ENCODE measurements at regions of chr6 and their contacts with region 1.

Region 1: GRCh38 chr6:36615018-36615761 is 21.0 kb downstream of the SRSF3 start:
- DNase-seq: peak; percentile 82
- ATAC-seq: peak; percentile 81
- H3K4me3 ChIP-seq: no peak overlapping the region
- H3K4me3 Mint-ChIP-seq: no peak overlapping the region
- H3K27ac ChIP-seq: no peak overlapping the region
- H3K27ac Mint-ChIP-seq: peak overlapping the region; percentile 69
- H3K4me1 ChIP-seq: peaks cover 9 to 21% of the 10 kb centered on the region in 2 donors
- H3K4me1 Mint-ChIP-seq: peaks cover 19% of the 10 kb centered on the region
- H3K27me3 ChIP-seq: no peaks in the 10 kb centered on the region
- H3K27me3 Mint-ChIP-seq: no peaks in the 10 kb centered on the region
- CTCF ChIP-seq: peak; percentile 84

Region 2: GRCh38 chr6:35259194-35259947 is 1355.8 kb before region 1 on chr6 and contains the start of gene ZNF76:
- CTCF ChIA-PET with region 1: no interaction called
- POLR2A ChIA-PET with region 1: no interaction called
- intact Hi-C with region 1: no loop called
- DNase-seq: peak; percentile 97
- ATAC-seq: peak; percentile 81
- H3K4me3 ChIP-seq: peak within 1 kb of the TSS; percentile 63 to 90 (median 81)
- H3K4me3 Mint-ChIP-seq: peak within 1 kb of the TSS; percentile 99
- H3K27ac ChIP-seq: peak within 1 kb of the TSS; percentile 97 to 98
- H3K27ac Mint-ChIP-seq: peak within 1 kb of the TSS; percentile 98
- H3K4me1 ChIP-seq: peaks cover 21 to 30% of the 10 kb centered on the region in 2 donors
- H3K4me1 Mint-ChIP-seq: peaks cover 47% of the 10 kb centered on the region
- H3K27me3 ChIP-seq: no peaks in the 10 kb centered on the region
- H3K27me3 Mint-ChIP-seq: no peaks in the 10 kb centered on the region
- CTCF ChIP-seq: no peak
- total RNA-seq, gene ZNF76: 96.9 and 107 TPM in 2 replicates

Region 3: DNA sequence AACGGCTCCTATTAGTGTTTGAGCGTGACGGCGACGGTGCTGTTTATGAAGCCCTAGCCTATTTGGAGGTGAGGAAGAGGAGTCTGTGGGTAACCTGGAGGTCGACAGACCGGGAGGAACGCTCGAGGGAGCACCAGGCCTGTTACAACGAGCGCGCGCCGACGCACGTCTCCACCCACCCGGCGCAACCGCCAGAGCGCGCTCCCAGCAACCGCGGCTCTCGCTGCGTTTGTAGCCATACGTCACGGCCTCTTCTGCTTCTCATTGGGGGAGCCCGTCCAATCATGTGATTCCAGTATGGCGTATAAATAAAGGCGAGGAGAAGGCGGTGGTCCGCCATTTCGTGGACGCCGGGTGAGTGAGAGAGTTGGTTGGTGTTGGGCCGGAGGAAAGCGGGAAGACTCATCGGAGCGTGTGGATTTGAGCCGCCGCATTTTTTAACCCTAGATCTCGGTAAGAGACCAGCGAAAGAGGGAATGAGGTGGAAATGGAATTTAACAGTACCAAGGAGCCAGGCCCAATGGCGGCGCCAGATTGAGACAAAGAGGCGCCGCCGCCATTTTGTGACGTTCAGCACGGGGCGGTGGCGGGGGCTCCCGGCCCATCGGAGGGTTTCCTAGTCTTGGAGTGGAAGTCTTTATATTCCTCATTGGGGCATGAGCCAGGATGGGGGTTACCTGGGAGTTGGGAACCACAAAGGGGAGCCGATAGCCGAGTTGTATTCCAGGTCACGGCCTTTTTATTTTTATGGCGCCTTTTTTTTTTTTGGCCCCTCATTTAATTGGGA is 21.0 kb before region 1 on chr6 and contains the start of gene SRSF3:
- CTCF ChIA-PET with region 1: interaction called, 13 read pairs
- POLR2A ChIA-PET with region 1: no interaction called
- intact Hi-C with region 1: no loop called
- DNase-seq: peak; percentile 99
- ATAC-seq: peak; percentile 91
- H3K4me3 ChIP-seq: peak within 1 kb of the TSS; percentile 91 to 100 (median 97)
- H3K4me3 Mint-ChIP-seq: peak within 1 kb of the TSS; percentile 90
- H3K27ac ChIP-seq: peak within 1 kb of the TSS; percentile 93 to 99
- H3K27ac Mint-ChIP-seq: peak within 1 kb of the TSS; percentile 97
- H3K4me1 ChIP-seq: peaks cover 44 to 55% of the 10 kb centered on the region in 2 donors
- H3K4me1 Mint-ChIP-seq: peaks cover 48% of the 10 kb centered on the region
- H3K27me3 ChIP-seq: no peaks in the 10 kb centered on the region
- H3K27me3 Mint-ChIP-seq: no peaks in the 10 kb centered on the region
- CTCF ChIP-seq: peak; percentile 29
- total RNA-seq, gene SRSF3: 316 and 331 TPM in 2 replicates

Region 4: DNA sequence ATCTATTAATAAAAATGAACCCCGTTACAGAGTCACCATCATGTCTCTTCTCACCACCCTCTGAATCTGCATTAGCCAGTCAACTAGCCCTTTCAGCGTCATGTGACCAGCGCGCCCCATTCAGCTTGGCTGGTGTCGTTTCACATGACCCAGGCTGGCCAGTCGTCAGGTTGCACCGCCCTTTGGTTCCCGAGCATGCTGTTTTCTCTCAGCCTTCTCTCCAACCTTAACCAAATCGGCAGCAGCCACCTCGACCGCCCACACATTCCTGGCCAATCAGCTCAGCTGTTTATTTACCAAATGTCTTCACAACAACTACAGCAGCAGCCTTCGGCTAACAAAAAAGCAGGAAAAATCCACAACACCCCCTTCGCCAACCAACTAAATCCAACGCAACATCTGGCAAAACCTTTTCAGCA is 15.4 kb before region 1 on chr6:
- CTCF ChIA-PET with region 1: interaction called, 13 read pairs
- POLR2A ChIA-PET with region 1: no interaction called
- intact Hi-C with region 1: no loop called
- DNase-seq: no peak
- ATAC-seq: no peak
- H3K4me3 ChIP-seq: no peak overlapping the region
- H3K4me3 Mint-ChIP-seq: peak overlapping the region; percentile 41
- H3K27ac ChIP-seq: no peak overlapping the region
- H3K27ac Mint-ChIP-seq: peak overlapping the region; percentile 61
- H3K4me1 ChIP-seq: peaks cover 42% of the 10 kb centered on the region in 2 donors
- H3K4me1 Mint-ChIP-seq: peaks cover 70% of the 10 kb centered on the region
- H3K27me3 ChIP-seq: no peaks in the 10 kb centered on the region
- H3K27me3 Mint-ChIP-seq: no peaks in the 10 kb centered on the region
- CTCF ChIP-seq: no peak

Region 5: GRCh38 chr6:36724514-36725390 is 109.6 kb after region 1 on chr6:
- CTCF ChIA-PET with region 1: interaction called, 22 read pairs
- POLR2A ChIA-PET with region 1: no interaction called
- intact Hi-C with region 1: no loop called
- DNase-seq: peak; percentile 63
- ATAC-seq: no peak
- H3K4me3 ChIP-seq: no peak overlapping the region
- H3K4me3 Mint-ChIP-seq: peak overlapping the region; percentile 1
- H3K27ac ChIP-seq: no peak overlapping the region
- H3K27ac Mint-ChIP-seq: peak overlapping the region; percentile 26
- H3K4me1 ChIP-seq: peaks cover 51 to 53% of the 10 kb centered on the region in 2 donors
- H3K4me1 Mint-ChIP-seq: peaks cover 58% of the 10 kb centered on the region
- H3K27me3 ChIP-seq: no peaks in the 10 kb centered on the region
- H3K27me3 Mint-ChIP-seq: no peaks in the 10 kb centered on the region
- CTCF ChIP-seq: peak; percentile 21

Region 6: DNA sequence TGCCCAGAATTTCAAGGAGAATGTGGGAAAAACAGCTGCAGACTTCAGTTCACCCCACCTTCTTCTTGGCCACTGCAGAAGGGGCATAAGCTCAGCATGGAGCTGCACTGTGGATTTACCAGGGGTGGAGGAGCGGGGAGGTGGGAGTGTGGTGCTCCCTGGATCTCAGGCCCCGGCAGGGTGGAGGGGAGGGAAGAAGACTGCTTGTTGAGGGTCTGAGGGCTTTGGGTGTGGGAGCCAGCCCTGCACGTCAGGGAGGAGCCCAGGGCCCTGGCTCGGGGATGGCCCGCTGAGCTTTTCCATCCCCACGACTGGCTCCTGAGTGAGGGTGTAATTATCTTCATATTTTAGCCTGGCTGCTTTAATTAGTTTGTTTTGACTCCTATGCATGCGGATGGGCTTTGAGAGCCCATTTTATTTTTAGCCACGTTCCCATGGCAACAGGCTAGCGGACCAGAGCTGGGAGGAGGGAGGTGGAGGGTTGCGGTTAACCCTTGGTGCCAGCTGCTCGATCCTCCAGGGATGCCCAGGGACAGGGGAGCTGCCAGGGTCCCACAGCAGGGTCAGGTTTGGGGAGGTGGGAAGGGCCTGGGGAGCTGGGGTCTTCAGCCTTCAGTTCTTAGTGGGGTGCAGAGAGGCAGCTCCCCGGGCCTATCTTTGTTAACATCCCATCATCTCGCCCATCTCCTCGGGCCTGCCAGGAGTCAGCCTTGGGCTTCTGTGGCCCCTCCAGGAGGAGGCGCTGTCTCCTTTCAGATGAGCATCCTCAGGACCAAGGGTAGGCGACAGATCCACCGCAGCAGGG is 150.6 kb after region 1 on chr6:
- CTCF ChIA-PET with region 1: interaction called, 215 read pairs
- POLR2A ChIA-PET with region 1: interaction called, 3 read pairs
- intact Hi-C with region 1: no loop called
- DNase-seq: peak; percentile 88
- ATAC-seq: peak; percentile 91
- H3K4me3 ChIP-seq: peak overlapping the region in 1 of 5 experiments; percentile 9
- H3K4me3 Mint-ChIP-seq: peak overlapping the region; percentile 60
- H3K27ac ChIP-seq: no peak overlapping the region
- H3K27ac Mint-ChIP-seq: peak overlapping the region; percentile 60
- H3K4me1 ChIP-seq: peaks cover 45 to 54% of the 10 kb centered on the region in 2 donors
- H3K4me1 Mint-ChIP-seq: peaks cover 41% of the 10 kb centered on the region
- H3K27me3 ChIP-seq: peaks cover 0 to 3% (median 0%) of the 10 kb centered on the region in 4 experiments
- H3K27me3 Mint-ChIP-seq: no peaks in the 10 kb centered on the region
- CTCF ChIP-seq: peak; percentile 92

Region 7: DNA sequence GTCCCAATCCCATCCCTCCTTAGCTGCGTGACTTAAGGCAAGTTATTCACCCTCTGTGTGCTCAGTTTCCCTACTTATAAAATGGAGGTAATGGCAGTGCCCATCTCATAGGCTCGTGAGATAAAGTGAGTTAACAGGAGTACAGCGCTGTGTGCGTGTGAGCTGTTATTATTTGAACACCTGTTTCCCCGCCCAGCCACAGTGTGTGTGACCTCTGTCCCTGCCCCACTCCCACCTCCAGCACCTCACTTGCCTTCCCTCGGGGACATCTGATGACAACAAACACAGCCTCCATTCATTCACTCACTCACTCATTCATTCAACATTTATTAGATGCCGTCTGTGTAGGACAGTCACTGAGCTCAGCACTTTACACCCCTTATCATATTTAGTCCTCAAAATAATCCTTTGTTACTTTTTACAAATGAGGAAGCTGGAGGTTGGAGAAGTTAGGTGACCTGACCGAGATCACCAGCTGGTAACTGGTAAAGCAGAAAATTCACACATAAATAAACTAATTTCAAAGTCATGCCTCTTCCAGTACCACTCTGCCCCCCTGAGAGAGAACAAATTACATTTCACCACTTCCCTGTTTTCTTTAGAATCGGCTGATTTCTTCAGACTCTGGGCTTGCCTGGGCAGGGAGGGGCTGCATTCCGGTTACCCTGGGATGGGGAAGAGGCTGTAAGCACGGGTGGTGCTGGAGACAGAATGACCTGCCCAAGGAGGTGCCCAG is 165.4 kb after region 1 on chr6:
- CTCF ChIA-PET with region 1: interaction called, 43 read pairs
- POLR2A ChIA-PET with region 1: interaction called, 10 read pairs
- intact Hi-C with region 1: no loop called
- DNase-seq: peak; percentile 54
- ATAC-seq: peak; percentile 42
- H3K4me3 ChIP-seq: no peak overlapping the region
- H3K4me3 Mint-ChIP-seq: peak overlapping the region; percentile 64
- H3K27ac ChIP-seq: peak overlapping the region in 1 of 2 donors; percentile 10
- H3K27ac Mint-ChIP-seq: peak overlapping the region; percentile 71
- H3K4me1 ChIP-seq: peaks cover 21 to 28% of the 10 kb centered on the region in 2 donors
- H3K4me1 Mint-ChIP-seq: peaks cover 27% of the 10 kb centered on the region
- H3K27me3 ChIP-seq: peaks cover 0 to 9% (median 0%) of the 10 kb centered on the region in 4 experiments
- H3K27me3 Mint-ChIP-seq: peaks cover 17% of the 10 kb centered on the region
- CTCF ChIP-seq: no peak

Region 8: GRCh38 chr6:36851149-36851614 is 236.0 kb after region 1 on chr6:
- CTCF ChIA-PET with region 1: interaction called, 35 read pairs
- POLR2A ChIA-PET with region 1: no interaction called
- intact Hi-C with region 1: loop called (anchors 1 kb)
- DNase-seq: peak; percentile 69
- ATAC-seq: peak; percentile 43
- H3K4me3 ChIP-seq: no peak overlapping the region
- H3K4me3 Mint-ChIP-seq: no peak overlapping the region
- H3K27ac ChIP-seq: no peak overlapping the region
- H3K27ac Mint-ChIP-seq: no peak overlapping the region
- H3K4me1 ChIP-seq: peaks cover 0 to 8% of the 10 kb centered on the region in 2 donors
- H3K4me1 Mint-ChIP-seq: peaks cover 8% of the 10 kb centered on the region
- H3K27me3 ChIP-seq: peaks cover 0 to 11% (median 5%) of the 10 kb centered on the region in 4 experiments
- H3K27me3 Mint-ChIP-seq: peaks cover 3% of the 10 kb centered on the region
- CTCF ChIP-seq: peak; percentile 83